Heart right ventricle (tissue), 16 donors: ENCODE measurements at regions of chr21 and their contacts with region 1.

Region 1: DNA sequence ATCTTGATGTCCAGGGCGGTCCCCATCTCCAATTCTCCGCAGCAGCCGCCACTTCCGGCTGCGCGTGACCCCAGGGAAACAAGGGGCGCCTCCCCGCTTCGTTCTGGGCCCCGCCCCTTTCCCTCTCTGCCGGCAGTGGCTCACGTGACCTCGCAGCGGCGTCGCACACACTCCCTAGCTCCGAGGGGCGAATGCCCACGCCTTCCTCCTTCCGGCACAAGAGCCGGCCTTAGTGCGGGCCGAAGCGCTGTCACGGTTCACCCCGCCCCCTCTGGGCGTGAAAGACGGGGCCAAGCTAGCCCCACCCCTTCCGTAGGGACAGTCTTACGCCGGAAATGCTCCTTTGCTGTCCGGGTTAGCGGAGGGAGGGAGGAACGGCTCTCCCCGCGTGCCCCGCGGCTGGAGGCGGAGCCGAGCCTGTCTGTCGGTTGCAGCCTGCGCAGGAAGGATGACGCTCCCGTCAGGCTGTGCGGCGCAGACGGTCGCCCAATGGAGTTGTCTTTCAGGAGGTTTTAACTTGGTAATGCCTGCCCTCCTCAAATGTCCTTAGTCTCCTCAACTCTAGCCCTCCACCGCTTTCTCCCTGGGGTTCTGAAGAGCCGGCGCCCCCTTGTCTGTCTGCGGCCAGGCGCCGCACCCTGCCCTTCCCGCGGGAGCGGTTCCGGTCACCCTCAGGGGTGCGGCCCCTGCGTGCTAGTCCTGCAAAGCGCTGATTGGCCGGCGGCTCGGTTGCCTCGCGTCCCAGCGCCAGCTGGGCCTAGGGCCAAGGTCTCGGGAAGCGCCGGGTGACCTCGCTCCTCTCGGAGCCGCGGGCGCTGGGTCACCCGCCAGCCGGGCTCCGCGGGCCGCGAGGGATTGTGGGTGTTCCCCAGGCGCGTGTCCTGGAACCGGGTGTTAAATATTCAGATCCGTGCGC is at the start of gene VPS26C:
- DNase-seq: peak; percentile 98
- ATAC-seq: peak; percentile 94 to 98 (median 96)
- H3K4me3 ChIP-seq: peak within 1 kb of the TSS; percentile 59 to 93 (median 89)
- H3K27ac ChIP-seq: peak within 1 kb of the TSS; percentile 95 to 99 (median 97)
- H3K4me1 ChIP-seq: peaks cover 5 to 46% (median 35%) of the 10 kb centered on the region in 9 donors
- H3K27me3 ChIP-seq: no peaks in the 10 kb centered on the region
- CTCF ChIP-seq: no peak
- total RNA-seq, gene VPS26C: 37.6 to 57.5 (median 47.0) TPM

Region 2: GRCh38 chr21:37244501-37245083 is 22.9 kb before region 1 on chr21:
- intact Hi-C with region 1: no loop called
- DNase-seq: no peak
- ATAC-seq: no peak
- H3K4me3 ChIP-seq: no peak overlapping the region
- H3K27ac ChIP-seq: no peak overlapping the region
- H3K4me1 ChIP-seq: peaks cover 0 to 35% (median 15%) of the 10 kb centered on the region in 9 donors
- H3K27me3 ChIP-seq: no peaks in the 10 kb centered on the region
- CTCF ChIP-seq: no peak

Region 3: GRCh38 chr21:37331411-37331810 is 63.9 kb after region 1 on chr21:
- intact Hi-C with region 1: loop called in 5 of 10 experiments (anchors 5 to 10 kb)
- DNase-seq: no peak
- ATAC-seq: no peak
- H3K4me3 ChIP-seq: no peak overlapping the region
- H3K27ac ChIP-seq: no peak overlapping the region
- H3K4me1 ChIP-seq: no peaks in the 10 kb centered on the region
- H3K27me3 ChIP-seq: no peaks in the 10 kb centered on the region
- CTCF ChIP-seq: no peak

Region 4: DNA sequence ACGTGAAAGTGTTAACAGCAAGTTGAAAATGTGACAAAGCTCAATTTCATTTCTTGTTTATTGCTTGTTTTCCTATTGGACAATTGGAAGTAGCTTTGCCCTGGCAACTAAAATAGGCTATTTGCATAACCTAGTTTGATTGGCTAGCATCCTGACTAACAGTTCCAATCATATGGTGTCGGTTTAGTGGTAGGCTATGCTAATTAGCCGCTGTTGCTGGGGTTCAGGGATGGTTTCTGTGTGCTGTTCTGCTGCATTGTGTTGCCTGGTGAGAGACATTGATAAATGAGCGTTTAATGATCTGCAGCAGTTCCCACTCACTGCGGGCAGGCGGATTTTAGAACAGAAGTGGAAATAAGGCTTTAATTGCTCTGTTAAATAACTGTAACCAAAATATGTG is 167.6 kb after region 1 on chr21:
- intact Hi-C with region 1: loop called in 1 of 10 experiments (anchors 10 kb)
- DNase-seq: peak in 1 of 2 donors; percentile 80
- ATAC-seq: peak; percentile 95 to 99 (median 98)
- H3K4me3 ChIP-seq: peak overlapping the region in 3 of 10 donors; percentile 3 to 28 (median 16)
- H3K27ac ChIP-seq: peak overlapping the region in 7 of 10 donors; percentile 18 to 72 (median 52)
- H3K4me1 ChIP-seq: peaks cover 4 to 95% (median 81%) of the 10 kb centered on the region in 9 donors
- H3K27me3 ChIP-seq: no peaks in the 10 kb centered on the region
- CTCF ChIP-seq: no peak

Region 5: DNA sequence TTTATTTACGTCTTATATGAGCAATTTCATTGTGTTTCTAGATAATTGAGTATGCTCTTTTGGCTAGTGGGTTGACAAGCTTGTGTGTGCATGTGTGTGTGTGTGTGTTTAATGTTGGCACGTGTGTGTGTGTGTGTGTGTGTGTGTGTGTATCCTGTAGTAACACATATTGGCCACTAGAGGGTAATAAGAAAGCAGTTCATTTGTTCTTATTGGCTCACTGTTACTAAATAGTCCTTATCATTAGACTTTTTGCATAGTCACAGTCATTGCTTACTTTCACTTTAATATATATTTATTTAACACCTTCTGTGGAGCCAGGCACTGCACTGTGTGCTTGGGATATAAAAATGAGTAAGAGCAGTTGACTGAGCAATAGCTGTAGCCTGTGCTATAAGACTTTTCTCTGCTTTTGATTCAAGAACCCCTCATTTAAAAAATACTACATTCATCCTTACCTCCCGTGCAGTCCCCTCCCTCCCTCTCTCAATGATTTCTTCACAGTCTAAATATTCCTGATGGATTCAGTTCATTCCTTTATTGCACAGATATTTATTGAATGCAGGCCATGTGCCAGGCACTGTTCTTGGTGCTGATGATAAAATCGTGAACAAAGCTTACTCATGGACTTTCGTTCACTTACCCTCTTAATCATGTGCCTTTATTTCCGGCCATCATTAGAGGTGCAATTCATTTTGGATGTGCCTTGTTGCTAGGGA is 195.7 kb after region 1 on chr21:
- intact Hi-C with region 1: loop called in 3 of 10 experiments (anchors 10 kb)
- DNase-seq: no peak
- ATAC-seq: peak; percentile 28 to 72 (median 62)
- H3K4me3 ChIP-seq: peak overlapping the region in 3 of 10 donors; percentile 5 to 27 (median 16)
- H3K27ac ChIP-seq: peak overlapping the region in 3 of 10 donors; percentile 8 to 46 (median 32)
- H3K4me1 ChIP-seq: peaks cover 6 to 78% (median 69%) of the 10 kb centered on the region in 9 donors
- H3K27me3 ChIP-seq: no peaks in the 10 kb centered on the region
- CTCF ChIP-seq: peak; percentile 38 to 58 (median 50)

Region 6: GRCh38 chr21:37563641-37564340 is 296.3 kb after region 1 on chr21:
- intact Hi-C with region 1: loop called in 2 of 10 experiments (anchors 5 to 10 kb)
- DNase-seq: peak; percentile 93
- ATAC-seq: peak; percentile 94 to 98 (median 97)
- H3K4me3 ChIP-seq: peak overlapping the region; percentile 58 to 92 (median 70)
- H3K27ac ChIP-seq: peak overlapping the region; percentile 55 to 98 (median 94)
- H3K4me1 ChIP-seq: peaks cover 0 to 40% (median 26%) of the 10 kb centered on the region in 9 donors
- H3K27me3 ChIP-seq: no peaks in the 10 kb centered on the region
- CTCF ChIP-seq: peak in 7 of 9 donors; percentile 34 to 69 (median 46)